ENCODE measurements at regions of chr19 and their contacts with region 1.

Region 1: GRCh38 chr19:39924389-39924788 is 10.0 kb downstream of the FCGBP start:
- DNase-seq: no peak
- ATAC-seq: peak; percentile 6; the same call in 1 of the 2 replicates
- H3K4me3 ChIP-seq: no peak overlapping the region
- H3K27ac ChIP-seq: no peak overlapping the region
- H3K4me1 ChIP-seq: no peaks in the 10 kb centered on the region
- H3K27me3 ChIP-seq: peaks cover 5% of the 10 kb centered on the region; the same call in 1 of the 2 replicates
- CTCF ChIP-seq: no peak

Region 2: DNA sequence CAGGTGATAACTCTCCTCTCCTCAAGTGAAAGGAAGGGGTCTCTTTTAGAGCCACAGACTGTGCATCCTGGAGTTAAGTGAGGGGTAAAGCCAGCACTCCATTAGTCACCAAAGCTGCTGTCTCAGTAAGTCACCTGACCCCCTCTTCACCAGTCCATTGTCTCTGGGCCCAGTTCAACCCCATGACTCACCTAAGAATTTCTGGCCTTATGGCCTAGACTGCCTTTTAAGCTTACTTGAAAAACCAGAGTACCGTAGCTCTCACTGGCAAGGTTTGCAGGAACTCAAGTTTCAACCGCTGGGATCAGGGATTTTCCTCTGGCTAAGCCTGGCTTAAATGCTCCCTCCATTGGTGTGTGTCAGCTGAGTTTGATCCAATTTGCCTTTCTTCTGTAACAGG is 361.0 kb before region 1 on chr19:
- CTCF ChIA-PET with region 1: no interaction called
- POLR2A ChIA-PET with region 1: no interaction called
- in situ Hi-C with region 1: loop called (anchors 10 kb)
- intact Hi-C with region 1: no loop called
- DNase-seq: peak; percentile 81
- ATAC-seq: peak; percentile 10
- H3K4me3 ChIP-seq: no peak overlapping the region
- H3K27ac ChIP-seq: no peak overlapping the region
- H3K4me1 ChIP-seq: peaks cover 3% of the 10 kb centered on the region
- H3K27me3 ChIP-seq: peaks cover 74% of the 10 kb centered on the region
- CTCF ChIP-seq: no peak

Region 3: DNA sequence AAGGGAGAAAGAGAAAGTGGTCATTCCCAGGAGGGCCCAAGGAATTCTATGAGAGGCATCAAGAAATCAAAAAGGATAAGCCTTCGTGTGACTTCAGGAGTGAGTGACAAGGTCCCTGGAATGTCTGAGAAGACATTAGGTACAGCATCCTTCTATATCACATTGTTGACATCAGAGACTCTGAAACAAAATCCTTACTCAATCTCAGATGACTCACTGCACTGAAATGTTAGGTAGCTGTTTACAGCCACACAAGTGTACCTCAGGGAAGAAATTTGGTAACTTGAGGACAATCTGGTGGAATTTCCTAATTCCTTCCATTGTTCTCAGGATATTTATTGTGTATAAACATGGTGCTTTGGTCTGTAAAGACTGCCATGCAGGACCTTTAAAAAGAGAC is 228.0 kb before region 1 on chr19:
- CTCF ChIA-PET with region 1: no interaction called
- POLR2A ChIA-PET with region 1: no interaction called
- in situ Hi-C with region 1: no loop called
- intact Hi-C with region 1: no loop called
- DNase-seq: no peak
- ATAC-seq: peak; percentile 19
- H3K4me3 ChIP-seq: no peak overlapping the region
- H3K27ac ChIP-seq: no peak overlapping the region
- H3K4me1 ChIP-seq: no peaks in the 10 kb centered on the region
- H3K27me3 ChIP-seq: peaks cover 95% of the 10 kb centered on the region
- CTCF ChIP-seq: no peak

Region 4: GRCh38 chr19:39824143-39825092 is 100.0 kb before region 1 on chr19:
- CTCF ChIA-PET with region 1: no interaction called
- POLR2A ChIA-PET with region 1: interaction called, 14 read pairs
- in situ Hi-C with region 1: no loop called
- intact Hi-C with region 1: no loop called
- DNase-seq: peak; percentile 100
- ATAC-seq: peak; percentile 97
- H3K4me3 ChIP-seq: peak overlapping the region; percentile 37 to 51
- H3K27ac ChIP-seq: peak overlapping the region; percentile 78
- H3K4me1 ChIP-seq: peaks cover 22% of the 10 kb centered on the region
- H3K27me3 ChIP-seq: no peaks in the 10 kb centered on the region
- CTCF ChIP-seq: no peak

Region 5: DNA sequence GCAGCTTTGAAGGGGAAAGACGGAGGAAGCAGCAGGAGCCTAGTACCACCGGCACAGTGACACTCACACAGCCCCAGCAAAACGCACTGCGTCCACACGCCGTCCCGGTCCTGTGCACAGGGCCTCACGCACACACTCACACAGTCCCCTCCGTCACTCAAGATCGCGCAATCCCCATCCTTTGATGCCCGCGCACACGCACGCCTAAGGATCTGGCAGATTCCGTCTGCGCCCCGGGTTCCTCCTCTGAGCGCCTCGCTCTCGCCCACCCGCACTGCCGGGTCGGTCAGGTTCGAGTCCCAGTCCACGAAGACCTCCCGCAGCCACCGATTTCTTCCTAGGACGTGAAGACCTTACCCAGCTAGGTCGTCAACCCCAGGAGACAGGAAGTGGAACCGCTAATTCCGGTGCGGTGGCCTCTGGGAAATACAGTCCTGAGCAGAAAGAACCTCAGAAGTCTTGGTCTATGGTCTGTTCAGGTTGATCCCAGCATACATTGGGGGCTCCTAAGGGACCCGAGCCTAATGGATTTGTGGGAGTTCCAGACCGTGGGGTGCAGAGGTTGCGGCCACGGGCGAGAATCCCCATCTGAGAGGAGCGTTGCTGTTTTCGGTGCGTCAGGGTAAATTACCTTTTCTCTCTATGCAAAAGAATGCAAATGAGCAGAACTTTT is 131.6 kb after region 1 on chr19 and contains the start of gene ZNF780B:
- CTCF ChIA-PET with region 1: interaction called, 4 read pairs
- POLR2A ChIA-PET with region 1: interaction called, 4 read pairs
- in situ Hi-C with region 1: loop called (anchors 10 kb)
- intact Hi-C with region 1: no loop called
- DNase-seq: peak; percentile 100
- ATAC-seq: peak; percentile 99
- H3K4me3 ChIP-seq: peak within 1 kb of the TSS; percentile 36 to 50
- H3K27ac ChIP-seq: peak within 1 kb of the TSS; percentile 78
- H3K4me1 ChIP-seq: peaks cover 16% of the 10 kb centered on the region
- H3K27me3 ChIP-seq: no peaks in the 10 kb centered on the region
- CTCF ChIP-seq: no peak
- total RNA-seq, gene ZNF780B: 237 TPM

Region 6: GRCh38 chr19:40089462-40089861 is 165.1 kb after region 1 on chr19:
- CTCF ChIA-PET with region 1: no interaction called
- POLR2A ChIA-PET with region 1: no interaction called
- in situ Hi-C with region 1: no loop called
- intact Hi-C with region 1: no loop called
- DNase-seq: no peak
- ATAC-seq: no peak
- H3K4me3 ChIP-seq: peak overlapping the region; percentile 36 to 48
- H3K27ac ChIP-seq: peak overlapping the region; percentile 83
- H3K4me1 ChIP-seq: peaks cover 25% of the 10 kb centered on the region
- H3K27me3 ChIP-seq: no peaks in the 10 kb centered on the region; the same call in 1 of the 2 replicates
- CTCF ChIP-seq: no peak

Region 7: DNA sequence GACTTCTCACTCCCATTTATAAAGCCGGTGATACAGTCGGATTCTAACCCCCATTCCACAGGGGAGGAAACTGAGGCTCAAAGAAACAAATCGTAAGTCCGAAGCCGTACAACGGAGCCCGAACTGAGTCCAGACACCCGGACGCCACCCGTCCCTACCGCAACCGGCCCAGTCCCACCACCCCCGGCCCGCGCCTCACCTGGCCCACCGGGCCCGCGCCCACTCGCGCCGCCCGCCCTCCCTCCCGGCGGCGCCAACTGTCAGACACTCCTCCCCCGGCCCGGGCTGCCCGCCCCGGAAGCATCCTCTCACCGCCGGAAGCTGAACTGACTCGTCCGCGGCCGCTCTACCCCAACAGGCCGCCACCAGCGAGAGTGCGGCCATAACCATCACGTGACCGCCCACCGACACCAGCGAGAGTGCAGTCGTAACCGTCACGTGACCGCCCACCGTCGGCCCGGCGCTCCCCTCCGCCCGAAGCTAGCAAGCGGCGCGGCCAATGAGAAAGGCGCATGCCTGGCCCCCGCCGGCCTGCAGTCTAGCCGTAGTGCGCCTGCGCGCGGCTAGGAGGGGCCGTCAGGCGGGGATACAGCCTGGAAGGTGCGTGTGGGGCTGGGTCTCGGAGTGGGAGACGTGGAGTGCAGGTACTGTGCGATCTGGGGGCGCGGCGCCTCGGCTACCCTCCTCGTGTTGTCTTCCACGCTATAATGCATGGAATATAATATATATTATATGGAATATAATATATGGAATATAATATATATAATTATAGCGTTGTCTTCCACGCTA is 423.9 kb after region 1 on chr19 and contains the starts of genes C19orf47 and PLD3:
- CTCF ChIA-PET with region 1: no interaction called
- POLR2A ChIA-PET with region 1: no interaction called
- in situ Hi-C with region 1: loop called (anchors 10 kb)
- intact Hi-C with region 1: no loop called
- DNase-seq: peak; percentile 78
- ATAC-seq: peak; percentile 99
- H3K4me3 ChIP-seq: peak within 1 kb of the TSS; percentile 80 to 98
- H3K27ac ChIP-seq: peak within 1 kb of the TSS; percentile 85
- H3K4me1 ChIP-seq: peaks cover 3% of the 10 kb centered on the region; the same call in 1 of the 2 replicates
- H3K27me3 ChIP-seq: no peaks in the 10 kb centered on the region
- CTCF ChIP-seq: no peak
- total RNA-seq, gene C19orf47: 29.0 TPM
- total RNA-seq, gene PLD3: 81.8 TPM